Uterus (tissue), 4 donors: ENCODE measurements at regions of chr1 and their contacts with region 1.

Region 1: DNA sequence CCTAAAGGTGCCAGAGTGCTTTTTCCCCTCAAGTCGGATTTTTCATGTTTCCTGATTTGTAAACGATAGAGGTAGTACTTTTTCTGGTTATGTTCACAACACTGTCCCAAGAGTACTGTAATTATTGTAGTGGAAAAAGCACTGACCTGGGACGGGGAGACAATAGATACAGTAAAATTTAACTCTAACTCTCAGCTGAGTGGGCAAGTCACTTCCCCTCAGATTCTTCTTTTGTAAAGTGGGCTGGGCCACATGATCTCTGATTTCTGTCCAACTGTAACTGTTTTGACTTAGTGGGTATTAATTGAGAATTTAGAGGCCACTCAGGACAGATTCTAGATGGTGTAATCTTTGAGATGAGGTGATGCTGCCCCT is 19.1 kb downstream of the MARCKSL1 start:
- DNase-seq: no peak
- H3K4me3 ChIP-seq: no peak overlapping the region
- H3K27ac ChIP-seq: no peak overlapping the region
- H3K4me1 ChIP-seq: no peaks in the 10 kb centered on the region
- H3K27me3 ChIP-seq: no peaks in the 10 kb centered on the region
- CTCF ChIP-seq: no peak
- POLR2A ChIP-seq: no peak

Region 2: DNA sequence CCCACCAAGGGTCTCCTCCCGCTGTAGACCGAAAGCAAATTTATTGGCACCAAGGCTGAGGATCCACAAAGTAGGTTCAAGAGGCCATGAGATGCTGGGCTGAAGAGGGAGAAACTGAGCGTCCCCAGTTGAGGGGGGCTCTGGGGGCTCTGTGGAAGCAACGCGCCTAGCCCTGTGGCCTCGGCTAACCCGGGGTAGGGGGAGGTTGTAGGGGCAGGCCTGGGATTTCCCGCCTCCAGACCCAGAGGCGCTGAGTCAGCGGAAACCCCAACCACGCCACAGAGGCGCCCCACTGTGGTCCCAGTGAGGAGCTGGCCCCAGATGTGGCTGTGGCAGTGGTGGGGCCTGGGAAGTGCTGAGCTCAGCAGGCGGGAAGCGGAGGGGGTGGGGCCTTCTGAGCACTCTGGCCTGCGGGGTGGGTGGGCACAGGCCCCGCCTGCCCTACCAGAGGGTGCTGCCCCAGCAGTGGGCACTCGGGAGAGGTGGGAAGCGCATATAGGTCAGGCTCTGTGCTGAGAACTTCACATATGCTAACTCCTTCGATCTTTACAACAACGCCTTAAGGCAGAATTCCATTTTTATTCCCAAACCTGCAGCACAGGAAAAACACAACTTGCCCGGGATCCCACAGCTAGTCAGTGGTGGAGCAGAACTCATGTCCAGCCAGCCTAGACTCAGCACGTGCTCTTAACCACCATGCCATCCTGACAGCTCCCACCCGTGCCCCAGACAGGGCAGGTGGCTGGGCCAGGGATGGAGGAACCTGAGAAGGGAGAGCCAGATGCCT is 611.6 kb before region 1 on chr1:
- intact Hi-C with region 1: no loop called
- DNase-seq: peak; percentile 63 to 71
- H3K4me3 ChIP-seq: no peak overlapping the region
- H3K27ac ChIP-seq: peak overlapping the region; percentile 80 to 89
- H3K4me1 ChIP-seq: peaks cover 11 to 22% of the 10 kb centered on the region in 2 donors
- H3K27me3 ChIP-seq: no peaks in the 10 kb centered on the region
- CTCF ChIP-seq: peak; percentile 14 to 49 (median 38)
- POLR2A ChIP-seq: no peak

Region 3: DNA sequence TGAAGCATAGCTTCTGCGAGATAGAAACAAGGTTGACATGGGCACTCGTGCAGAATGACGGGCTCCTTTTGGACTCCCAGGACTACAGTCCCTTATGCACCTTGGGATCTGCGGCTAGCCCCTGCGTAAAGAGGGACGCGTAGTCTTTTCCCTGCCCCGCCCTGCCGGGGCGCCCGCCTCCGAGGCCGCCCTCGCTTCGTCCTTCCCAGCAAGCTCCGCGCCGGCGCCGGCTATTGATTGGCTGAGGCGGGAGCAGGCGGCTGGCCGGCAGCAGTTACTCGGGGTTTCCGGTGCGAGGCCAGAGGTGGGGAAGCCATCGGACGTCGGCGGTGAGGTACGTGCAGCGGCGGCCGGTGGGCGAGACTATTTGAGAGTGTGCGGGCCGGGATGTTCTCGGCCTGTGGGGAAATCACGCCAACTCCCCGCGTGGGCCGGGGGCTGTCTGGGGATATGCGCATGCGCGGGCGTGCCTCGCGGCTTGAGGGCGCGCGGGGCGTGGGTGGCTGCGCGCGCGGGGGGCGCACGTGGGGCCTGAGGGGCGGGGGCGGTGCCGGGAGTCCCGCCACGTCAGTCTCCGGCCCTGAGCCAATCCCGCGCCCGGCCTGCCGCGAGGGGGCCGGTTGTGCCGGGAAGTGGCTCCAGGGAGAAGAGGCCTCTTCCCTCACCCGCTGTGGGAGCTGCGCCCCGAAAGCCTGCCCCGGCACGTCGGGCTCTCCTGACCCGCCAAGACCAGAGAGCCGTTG is 137.3 kb before region 1 on chr1 and contains the start of gene TXLNA:
- intact Hi-C with region 1: no loop called
- DNase-seq: peak; percentile 93 to 94
- H3K4me3 ChIP-seq: peak within 1 kb of the TSS; percentile 50 to 63
- H3K27ac ChIP-seq: peak within 1 kb of the TSS; percentile 91 to 96
- H3K4me1 ChIP-seq: peaks cover 13 to 15% of the 10 kb centered on the region in 2 donors
- H3K27me3 ChIP-seq: no peaks in the 10 kb centered on the region
- CTCF ChIP-seq: peak; percentile 14 to 32 (median 24)
- POLR2A ChIP-seq: peak; percentile 22 to 71
- total RNA-seq, gene TXLNA: 14.1 to 60.1 (median 40.4) TPM

Region 4: GRCh38 chr1:32247983-32248889 is 68.7 kb before region 1 on chr1:
- intact Hi-C with region 1: loop called (anchors 10 kb)
- DNase-seq: peak; percentile 73 to 84
- H3K4me3 ChIP-seq: no peak overlapping the region
- H3K27ac ChIP-seq: peak overlapping the region; percentile 67
- H3K4me1 ChIP-seq: no peaks in the 10 kb centered on the region
- H3K27me3 ChIP-seq: no peaks in the 10 kb centered on the region
- CTCF ChIP-seq: peak; percentile 61 to 84 (median 82)
- POLR2A ChIP-seq: no peak